WTC11 (cell line): ENCODE measurements at regions of chr13 and their contacts with region 1.

Region 1: DNA sequence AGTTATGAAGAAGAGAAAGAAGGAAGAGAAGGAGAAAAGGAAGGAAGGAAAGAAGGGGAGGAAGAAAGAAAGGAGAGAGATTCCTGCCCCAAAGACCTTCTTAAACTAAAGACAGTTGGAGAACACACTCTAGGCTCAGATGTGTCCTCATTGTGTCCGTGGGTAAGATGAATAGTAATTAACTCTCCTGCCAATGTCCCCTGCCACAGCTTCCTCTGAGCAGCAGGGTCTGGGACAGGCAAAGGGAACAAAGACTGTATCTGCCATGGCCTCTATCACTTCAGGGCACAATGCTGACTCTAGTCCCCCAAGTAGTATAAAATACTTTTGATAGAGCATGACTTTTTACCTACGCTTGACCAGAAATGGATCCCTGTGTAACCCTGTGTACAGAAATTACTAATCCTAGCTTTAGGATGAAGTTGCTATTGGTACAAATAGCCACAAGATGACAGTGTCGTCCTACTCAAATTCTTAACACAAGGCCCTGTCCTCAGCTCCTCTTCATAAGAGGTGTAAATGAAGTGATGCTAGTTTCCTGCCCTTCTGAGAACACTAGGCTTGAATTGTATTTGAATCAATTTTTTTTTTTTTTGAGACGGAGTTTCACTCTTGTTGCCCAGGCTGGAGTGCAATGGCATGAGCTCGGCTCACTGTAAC is 186.2 kb upstream of the GPR12 start:
- DNase-seq: no peak
- ATAC-seq: peak; percentile 72
- H3K4me3 Mint-ChIP-seq: no peak overlapping the region
- H3K27ac Mint-ChIP-seq: no peak overlapping the region
- H3K4me1 Mint-ChIP-seq: peaks cover 5% of the 10 kb centered on the region
- H3K27me3 Mint-ChIP-seq: no peaks in the 10 kb centered on the region
- CTCF ChIP-seq: no peak; the same call in 1 of the 2 replicates

Region 2: DNA sequence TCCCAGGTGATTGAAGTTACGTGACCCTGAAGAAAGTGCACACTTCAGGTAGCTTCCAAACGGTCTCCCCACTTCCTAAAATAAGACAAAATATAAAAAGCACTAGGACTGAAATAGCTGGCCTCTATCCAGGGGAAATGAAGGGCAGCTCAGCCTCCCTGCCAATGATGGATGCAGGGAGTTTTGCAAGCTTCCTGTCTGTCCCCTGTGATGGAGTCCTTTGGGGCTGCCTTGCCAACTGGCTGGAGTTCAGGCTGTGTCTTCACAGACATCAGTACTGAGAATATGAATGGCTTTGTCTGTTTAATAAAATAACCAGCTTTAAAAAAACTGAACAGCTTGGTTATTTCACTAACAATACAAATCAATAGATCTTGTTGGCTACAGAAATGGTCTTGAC is 84.9 kb before region 1 on chr13:
- CTCF ChIA-PET with region 1: no interaction called
- POLR2A ChIA-PET with region 1: no interaction called
- DNase-seq: no peak
- ATAC-seq: no peak
- H3K4me3 Mint-ChIP-seq: no peak overlapping the region
- H3K27ac Mint-ChIP-seq: no peak overlapping the region
- H3K4me1 Mint-ChIP-seq: no peaks in the 10 kb centered on the region
- H3K27me3 Mint-ChIP-seq: no peaks in the 10 kb centered on the region; the same call in 1 of the 2 replicates
- CTCF ChIP-seq: no peak

Region 3: DNA sequence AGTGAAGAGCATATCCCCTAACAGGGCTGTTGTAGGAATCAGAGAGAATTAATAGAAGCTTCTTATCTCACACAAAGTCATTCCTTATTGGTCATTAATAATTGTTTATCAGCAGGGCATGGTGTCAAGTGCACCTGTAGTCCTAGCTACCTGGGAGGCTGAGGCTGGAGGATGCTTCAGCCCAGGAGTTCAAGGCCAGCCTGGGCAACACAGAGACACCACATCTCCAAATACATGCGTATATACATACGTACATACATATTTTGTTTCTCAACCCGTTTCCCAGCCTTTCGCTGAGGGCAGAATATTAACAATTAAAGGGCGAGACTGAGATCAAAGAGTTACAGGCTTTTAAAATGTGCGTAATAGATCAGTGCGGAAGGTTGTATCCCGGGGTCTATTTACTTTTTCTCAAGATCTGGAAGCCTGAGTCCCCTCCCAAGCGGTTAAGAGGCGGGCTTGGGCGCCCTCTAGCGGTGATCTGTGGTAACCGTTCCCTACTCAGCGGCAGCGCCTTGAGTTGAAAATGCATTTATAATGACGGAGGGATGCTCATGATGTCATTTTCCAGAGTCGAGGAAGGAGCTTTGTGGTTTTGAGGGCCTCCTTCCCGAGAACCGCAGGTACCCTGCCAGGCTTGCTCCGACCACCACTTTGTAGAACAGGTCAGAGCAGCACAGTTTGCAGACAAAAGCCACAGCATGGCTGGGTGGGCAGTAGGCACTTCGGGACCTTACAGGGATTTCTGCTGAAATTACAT is 16.7 kb before region 1 on chr13:
- CTCF ChIA-PET with region 1: interaction called, 13 read pairs
- POLR2A ChIA-PET with region 1: no interaction called
- DNase-seq: peak; percentile 89
- ATAC-seq: peak; percentile 93
- H3K4me3 Mint-ChIP-seq: peak overlapping the region; percentile 59
- H3K27ac Mint-ChIP-seq: 0 out of 2 replicates have a peak overlapping the region, but pooled peaks have one; percentile 33
- H3K4me1 Mint-ChIP-seq: 0 out of 2 replicates have a peak, but pooled peaks cover 2% of the 10 kb centered on the region
- H3K27me3 Mint-ChIP-seq: no peaks in the 10 kb centered on the region; the same call in 1 of the 2 replicates
- CTCF ChIP-seq: peak; percentile 97

Region 4: DNA sequence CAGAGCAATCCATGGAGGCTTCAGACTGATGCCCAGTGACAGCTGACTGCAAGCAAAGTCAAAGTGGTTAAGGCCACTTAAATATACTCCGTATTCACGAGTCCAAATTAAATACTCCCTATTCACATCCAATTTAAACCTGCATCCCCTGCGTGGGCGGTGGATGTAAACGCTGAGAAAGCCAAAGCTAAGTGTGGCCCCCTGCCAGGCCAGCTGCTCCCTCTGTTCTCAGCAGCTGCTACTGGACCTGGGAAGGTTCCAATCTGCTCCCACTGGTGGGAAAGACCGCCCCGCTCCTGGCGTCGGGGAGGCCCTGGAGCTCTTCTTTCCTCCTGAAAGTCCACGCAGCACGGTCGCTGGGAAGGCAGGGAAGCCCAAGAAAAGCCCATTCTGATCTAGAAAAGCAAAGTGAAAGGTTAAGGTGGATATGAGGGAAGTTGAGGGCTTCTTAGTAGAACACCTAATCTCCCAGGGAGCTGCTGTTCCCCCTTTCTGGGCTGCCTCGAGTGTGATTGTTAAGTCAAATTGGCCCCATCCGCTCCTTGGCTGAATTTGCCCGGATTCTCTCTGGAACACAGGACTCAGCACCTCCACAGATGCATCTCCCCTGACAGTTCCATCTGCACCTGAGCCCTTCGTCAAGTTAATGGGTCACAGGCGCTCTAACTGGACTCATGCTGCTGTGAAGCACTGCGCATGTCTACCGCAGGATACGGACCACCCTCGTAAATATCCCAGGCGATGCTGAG is 19.3 kb after region 1 on chr13:
- CTCF ChIA-PET with region 1: interaction called, 40 read pairs
- POLR2A ChIA-PET with region 1: no interaction called
- DNase-seq: no peak
- ATAC-seq: no peak
- H3K4me3 Mint-ChIP-seq: no peak overlapping the region
- H3K27ac Mint-ChIP-seq: no peak overlapping the region
- H3K4me1 Mint-ChIP-seq: peaks cover 10% of the 10 kb centered on the region
- H3K27me3 Mint-ChIP-seq: no peaks in the 10 kb centered on the region
- CTCF ChIP-seq: no peak

Region 5: GRCh38 chr13:26977556-26977955 is 30.7 kb after region 1 on chr13:
- CTCF ChIA-PET with region 1: interaction called, 40 read pairs
- POLR2A ChIA-PET with region 1: interaction called, 3 read pairs
- DNase-seq: no peak
- ATAC-seq: no peak
- H3K4me3 Mint-ChIP-seq: no peak overlapping the region
- H3K27ac Mint-ChIP-seq: no peak overlapping the region
- H3K4me1 Mint-ChIP-seq: peaks cover 13% of the 10 kb centered on the region
- H3K27me3 Mint-ChIP-seq: no peaks in the 10 kb centered on the region
- CTCF ChIP-seq: no peak

Region 6: GRCh38 chr13:27270594-27271520 is 324.0 kb after region 1 on chr13 and contains the start of gene RASL11A:
- CTCF ChIA-PET with region 1: interaction called, 14 read pairs
- POLR2A ChIA-PET with region 1: no interaction called
- DNase-seq: peak; percentile 87
- ATAC-seq: peak; percentile 90
- H3K4me3 Mint-ChIP-seq: peak within 1 kb of the TSS; percentile 89
- H3K27ac Mint-ChIP-seq: peak within 1 kb of the TSS; percentile 92; the same call in 1 of the 2 replicates
- H3K4me1 Mint-ChIP-seq: peaks cover 15% of the 10 kb centered on the region
- H3K27me3 Mint-ChIP-seq: peaks cover 45% of the 10 kb centered on the region
- CTCF ChIP-seq: peak; percentile 91
- total RNA-seq, gene RASL11A: 2.5 to 3.8 TPM (median 3.5 TPM) in 3 replicates

Region 7: DNA sequence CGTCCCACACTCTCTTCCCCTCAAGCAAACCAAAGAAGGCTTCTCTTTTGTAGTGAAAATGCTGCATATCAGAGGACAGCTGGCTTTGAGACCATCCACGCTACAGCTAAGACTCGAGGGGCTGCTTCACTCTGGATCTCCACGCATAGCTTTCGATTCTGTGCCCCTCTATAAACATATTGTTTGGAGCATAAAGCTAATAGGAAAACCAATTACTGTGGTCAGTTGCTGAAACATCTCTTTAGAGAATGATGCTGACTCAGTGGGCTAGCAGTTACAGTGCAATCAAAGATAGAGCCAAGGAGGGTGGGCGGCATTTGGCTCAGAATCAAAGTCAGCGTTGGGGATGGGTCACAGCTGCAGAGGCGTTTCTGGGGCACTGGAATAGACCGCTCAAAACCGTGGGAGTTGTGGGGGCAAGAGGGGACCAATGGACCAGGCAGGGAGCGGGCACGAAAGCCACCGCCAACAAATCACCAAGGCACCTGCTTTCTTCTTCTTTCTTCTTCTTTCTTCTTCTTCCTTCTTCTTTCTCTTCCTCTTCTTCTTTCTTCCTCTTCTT is 400.5 kb after region 1 on chr13:
- CTCF ChIA-PET with region 1: interaction called, 10 read pairs
- POLR2A ChIA-PET with region 1: no interaction called
- DNase-seq: no peak
- ATAC-seq: no peak
- H3K4me3 Mint-ChIP-seq: no peak overlapping the region
- H3K27ac Mint-ChIP-seq: no peak overlapping the region
- H3K4me1 Mint-ChIP-seq: no peaks in the 10 kb centered on the region
- H3K27me3 Mint-ChIP-seq: no peaks in the 10 kb centered on the region; the same call in 1 of the 2 replicates
- CTCF ChIP-seq: no peak